PC-3 (cell line): ENCODE measurements at regions of chr4 and their contacts with region 1.

Region 1: GRCh38 chr4:85778632-85779131 is 303.7 kb downstream of the ARHGAP24 start:
- DNase-seq: peak; percentile 24
- ATAC-seq: peak; percentile 36
- H3K4me3 ChIP-seq: peak overlapping the region; percentile 71
- H3K27ac ChIP-seq: peak overlapping the region; percentile 98
- H3K4me1 ChIP-seq: peaks cover 57% of the 10 kb centered on the region
- H3K27me3 ChIP-seq: no peaks in the 10 kb centered on the region
- CTCF ChIP-seq: no peak

Region 2: GRCh38 chr4:85761803-85762528 is 16.7 kb before region 1 on chr4:
- CTCF ChIA-PET with region 1: no interaction called
- POLR2A ChIA-PET with region 1: interaction called, 4 read pairs
- intact Hi-C with region 1: loop called (anchors 2 kb)
- DNase-seq: peak; percentile 24
- ATAC-seq: peak; percentile 72
- H3K4me3 ChIP-seq: peak overlapping the region; percentile 31; the same call in 1 of the 2 replicates
- H3K27ac ChIP-seq: peak overlapping the region; percentile 66
- H3K4me1 ChIP-seq: peaks cover 27% of the 10 kb centered on the region
- H3K27me3 ChIP-seq: no peaks in the 10 kb centered on the region
- CTCF ChIP-seq: no peak

Region 3: DNA sequence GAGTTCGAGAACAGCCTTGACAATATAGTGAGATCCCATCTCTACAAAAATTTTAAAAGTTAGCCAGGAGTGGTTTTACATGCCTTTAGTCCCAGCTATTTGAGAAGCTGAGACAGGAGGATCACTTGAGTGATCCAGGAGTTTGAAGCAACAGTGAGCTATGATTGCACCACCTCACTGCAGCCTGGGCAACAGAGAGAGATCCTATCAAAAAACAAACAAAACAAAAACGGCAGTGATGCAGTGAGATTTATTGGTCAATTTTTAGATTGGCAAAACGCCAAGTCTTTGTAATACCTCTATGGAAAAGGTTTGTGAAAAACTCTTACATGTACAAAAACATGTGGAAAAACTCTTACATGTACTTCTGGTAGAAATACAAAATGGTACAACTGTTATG is 906.7 kb after region 1 on chr4:
- CTCF ChIA-PET with region 1: no interaction called
- POLR2A ChIA-PET with region 1: no interaction called
- intact Hi-C with region 1: no loop called
- DNase-seq: peak; percentile 44
- ATAC-seq: no peak
- H3K4me3 ChIP-seq: no peak overlapping the region
- H3K27ac ChIP-seq: peak overlapping the region; percentile 12; the same call in 1 of the 2 replicates
- H3K4me1 ChIP-seq: peaks cover 9% of the 10 kb centered on the region; the same call in 1 of the 2 replicates
- H3K27me3 ChIP-seq: no peaks in the 10 kb centered on the region
- CTCF ChIP-seq: no peak